Activated CD4-positive, alpha-beta T cell treated with anti-CD3 and anti-CD28 coated beads, Interleukin-2, amount 10 ng/mL, durations not matched to agents 7 days and 5 days (primary cell): ENCODE measurements at regions of chr12 and their contacts with region 1.

Region 1: GRCh38 chr12:75526655-75527511 is 15.5 kb upstream of the KRR1 start:
- DNase-seq: peak; percentile 17
- H3K4me3 Mint-ChIP-seq: no peak overlapping the region
- H3K27ac Mint-ChIP-seq: no peak overlapping the region
- H3K4me1 Mint-ChIP-seq: peaks cover 9% of the 10 kb centered on the region
- H3K27me3 Mint-ChIP-seq: peaks cover 37% of the 10 kb centered on the region

Region 2: GRCh38 chr12:76037130-76038103 is 510.5 kb after region 1 on chr12:
- CTCF ChIA-PET with region 1: interaction called, 12 read pairs
- POLR2A ChIA-PET with region 1: interaction called, 9 read pairs
- DNase-seq: peak; percentile 50
- H3K4me3 Mint-ChIP-seq: no peak overlapping the region
- H3K27ac Mint-ChIP-seq: no peak overlapping the region
- H3K4me1 Mint-ChIP-seq: peaks cover 19% of the 10 kb centered on the region
- H3K27me3 Mint-ChIP-seq: peaks cover 5% of the 10 kb centered on the region